GM12878 (cell line): ENCODE measurements at regions of chr11 and their contacts with region 1.

Region 1: GRCh38 chr11:22337596-22338485 is at the start of gene SLC17A6:
- DNase-seq: no peak
- ATAC-seq: peak; percentile 76
- H3K4me3 ChIP-seq: no peak within 1 kb of the TSS
- H3K27ac ChIP-seq: no peak within 1 kb of the TSS
- H3K4me1 ChIP-seq: no peaks in the 10 kb centered on the region
- H3K27me3 ChIP-seq: peaks cover 15 to 24% of the 10 kb centered on the region in 2 experiments
- CTCF ChIP-seq: no peak
- EP300 ChIP-seq: no peak
- POLR2A ChIP-seq: no peak
- RAD21 ChIP-seq: no peak
- polyA plus RNA-seq, gene SLC17A6: not detected

Region 2: GRCh38 chr11:22392561-22392960 is 54.7 kb after region 1 on chr11:
- CTCF ChIA-PET with region 1: no interaction called
- POLR2A ChIA-PET with region 1: no interaction called
- RAD21 ChIA-PET with region 1: no interaction called
- SMC1A ChIA-PET with region 1: no interaction called
- in situ Hi-C with region 1: no loop called
- intact Hi-C with region 1: no loop called
- DNase-seq: no peak
- ATAC-seq: no peak
- H3K4me3 ChIP-seq: no peak overlapping the region
- H3K27ac ChIP-seq: no peak overlapping the region
- H3K4me1 ChIP-seq: no peaks in the 10 kb centered on the region
- H3K27me3 ChIP-seq: no peaks in the 10 kb centered on the region
- CTCF ChIP-seq: no peak
- EP300 ChIP-seq: no peak
- POLR2A ChIP-seq: no peak
- RAD21 ChIP-seq: no peak

Region 3: GRCh38 chr11:22433094-22433455 is 95.2 kb after region 1 on chr11:
- CTCF ChIA-PET with region 1: no interaction called
- POLR2A ChIA-PET with region 1: no interaction called
- RAD21 ChIA-PET with region 1: no interaction called
- SMC1A ChIA-PET with region 1: no interaction called
- in situ Hi-C with region 1: no loop called
- intact Hi-C with region 1: no loop called
- DNase-seq: no peak
- ATAC-seq: no peak
- H3K4me3 ChIP-seq: no peak overlapping the region
- H3K27ac ChIP-seq: no peak overlapping the region
- H3K4me1 ChIP-seq: no peaks in the 10 kb centered on the region
- H3K27me3 ChIP-seq: no peaks in the 10 kb centered on the region
- CTCF ChIP-seq: no peak
- EP300 ChIP-seq: no peak
- POLR2A ChIP-seq: no peak
- RAD21 ChIP-seq: no peak

Region 4: DNA sequence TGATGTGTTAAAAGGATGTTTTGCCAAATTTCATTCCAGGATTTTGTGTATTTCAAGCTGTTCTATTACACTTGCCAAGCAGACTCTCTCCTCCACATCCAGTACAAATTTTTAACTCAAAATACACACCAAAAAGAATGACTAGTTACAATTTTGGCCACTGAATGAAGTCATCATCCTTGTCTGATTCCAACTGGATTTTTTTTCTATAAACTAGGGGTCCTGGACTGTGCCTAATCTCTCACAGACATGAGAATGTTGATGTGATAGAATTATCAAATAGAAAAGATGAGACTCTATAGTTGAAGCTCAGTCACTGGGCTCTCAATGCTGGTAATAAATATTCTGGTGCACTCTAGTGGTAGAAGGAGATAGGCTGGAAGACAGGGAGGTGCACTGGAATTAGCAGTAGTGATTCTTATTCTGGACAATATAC is 202.0 kb after region 1 on chr11:
- CTCF ChIA-PET with region 1: interaction called, 12 read pairs
- POLR2A ChIA-PET with region 1: no interaction called
- RAD21 ChIA-PET with region 1: interaction called, 4 read pairs
- SMC1A ChIA-PET with region 1: interaction called, 9 read pairs
- in situ Hi-C with region 1: no loop called
- intact Hi-C with region 1: loop called (anchors 1 kb)
- DNase-seq: no peak
- ATAC-seq: peak; percentile 74
- H3K4me3 ChIP-seq: no peak overlapping the region
- H3K27ac ChIP-seq: no peak overlapping the region
- H3K4me1 ChIP-seq: no peaks in the 10 kb centered on the region
- H3K27me3 ChIP-seq: no peaks in the 10 kb centered on the region; a peak in 2 of 4 replicates
- CTCF ChIP-seq: peak; percentile 25 to 47 (median 33); a peak in 3 of 6 replicates
- EP300 ChIP-seq: no peak
- POLR2A ChIP-seq: no peak
- RAD21 ChIP-seq: peak; percentile 66